PC-9 (cell line): ENCODE measurements at regions of chr15 and their contacts with region 1.

Region 1: GRCh38 chr15:71278989-71279756 is 163.9 kb downstream of the THSD4 start:
- DNase-seq: peak; percentile 77 to 96
- H3K4me3 ChIP-seq: 0 out of 2 replicates have a peak overlapping the region, but pooled peaks have one; percentile 10
- H3K27ac ChIP-seq: peak overlapping the region; percentile 99
- H3K4me1 ChIP-seq: peaks cover 75% of the 10 kb centered on the region
- H3K27me3 ChIP-seq: no peaks in the 10 kb centered on the region
- CTCF ChIP-seq: no peak

Region 2: DNA sequence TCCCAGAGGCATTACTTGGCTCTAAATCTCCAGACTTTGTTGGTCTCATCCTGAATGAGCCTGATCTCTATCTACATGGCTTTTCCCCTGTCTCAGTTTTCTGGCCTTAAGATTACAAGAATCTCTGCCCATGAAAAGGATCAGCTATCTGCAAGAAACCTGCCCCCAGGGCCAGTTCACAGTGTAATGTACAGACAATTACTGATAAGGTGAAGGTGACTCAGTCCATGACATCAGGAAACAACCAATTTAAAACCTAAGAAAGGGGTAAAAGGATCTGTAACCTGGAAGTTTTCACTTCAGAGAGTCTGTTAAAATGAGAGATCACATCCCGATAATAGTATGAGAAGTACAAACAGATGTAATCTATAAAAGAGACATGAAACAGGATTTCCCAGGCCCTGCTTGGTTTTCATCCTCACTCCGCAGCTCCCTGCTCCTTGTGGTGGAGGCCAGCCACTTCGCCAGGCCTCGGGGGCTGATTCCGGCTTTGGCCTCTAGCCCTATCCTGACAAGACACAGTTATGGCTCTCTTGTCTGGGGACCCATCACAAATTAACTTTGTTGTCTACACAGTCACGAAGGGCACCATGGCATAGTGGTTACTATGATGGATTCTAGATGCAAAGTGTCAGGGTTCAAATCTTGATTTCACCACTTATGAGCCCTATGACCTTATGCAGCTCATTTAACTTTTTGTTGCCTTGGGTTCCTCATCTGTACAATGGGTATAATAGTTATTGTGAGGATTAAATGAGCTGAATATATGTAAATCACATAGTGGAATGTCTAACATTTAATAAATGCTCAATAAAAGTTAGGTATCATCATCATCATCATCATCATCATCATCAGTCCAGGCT is 26.9 kb before region 1 on chr15:
- CTCF ChIA-PET with region 1: no interaction called
- POLR2A ChIA-PET with region 1: no interaction called
- intact Hi-C with region 1: loop called (anchors 1 kb)
- DNase-seq: peak; percentile 82 to 96
- H3K4me3 ChIP-seq: no peak overlapping the region; the same call in 1 of the 2 replicates
- H3K27ac ChIP-seq: peak overlapping the region; percentile 90
- H3K4me1 ChIP-seq: peaks cover 37% of the 10 kb centered on the region
- H3K27me3 ChIP-seq: no peaks in the 10 kb centered on the region
- CTCF ChIP-seq: no peak